ENCODE measurements at regions of chr6 and their contacts with region 1.

Region 1: GRCh38 chr6:2988426-2989331 is 11.0 kb upstream of the NQO2 start:
- DNase-seq: peak; percentile 92 to 94
- ATAC-seq: peak; percentile 87 to 95 (median 90)
- H3K4me3 ChIP-seq: peak overlapping the region; percentile 78
- H3K27ac ChIP-seq: peak overlapping the region; percentile 96
- H3K4me1 ChIP-seq: peaks cover 9% of the 10 kb centered on the region
- H3K27me3 ChIP-seq: no peaks in the 10 kb centered on the region
- CTCF ChIP-seq: peak; percentile 82

Region 2: DNA sequence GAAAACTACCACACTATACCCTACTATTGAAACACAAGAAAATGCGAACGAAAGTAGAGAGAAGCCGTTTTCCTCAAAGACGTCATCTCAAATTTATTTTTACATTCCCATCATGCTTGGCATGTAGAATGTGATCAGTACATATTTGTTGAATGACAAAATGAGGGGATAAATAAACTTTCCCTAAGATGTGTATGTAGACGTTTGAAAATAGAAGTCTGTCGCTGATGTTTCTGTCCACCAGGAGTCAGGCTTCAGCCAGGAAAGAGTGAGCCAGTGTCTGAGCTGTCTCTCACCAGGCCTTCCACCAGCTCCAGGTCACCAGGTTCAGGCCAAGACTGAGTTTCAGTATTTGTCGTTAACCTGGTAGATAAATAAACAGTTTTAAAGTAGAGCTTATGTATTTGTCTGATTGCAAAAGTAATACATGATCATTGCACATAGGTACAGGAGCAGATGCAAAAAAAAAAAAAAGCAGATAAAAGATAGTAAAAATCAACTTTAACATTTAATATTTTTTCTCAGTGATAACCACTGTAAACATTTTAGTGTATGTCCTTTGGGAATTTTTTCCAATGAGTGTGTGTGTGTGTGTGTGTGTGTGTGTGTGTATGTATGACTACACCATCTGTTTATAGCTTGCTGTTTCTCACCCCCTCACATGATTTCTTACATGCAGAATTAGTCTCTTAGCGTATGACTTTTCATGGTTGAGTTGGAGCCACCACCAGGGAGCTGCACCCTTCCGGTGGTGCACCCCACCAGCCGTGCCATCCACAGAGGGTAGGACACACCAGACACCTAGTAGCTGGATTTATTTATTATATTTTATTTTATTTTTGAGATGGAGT is 197.3 kb before region 1 on chr6:
- intact Hi-C with region 1: loop called in 1 of 2 experiments (anchors 5 kb)
- DNase-seq: peak; percentile 47 to 73
- ATAC-seq: peak; percentile 68 to 91 (median 86)
- H3K4me3 ChIP-seq: peak overlapping the region; percentile 55
- H3K27ac ChIP-seq: peak overlapping the region; percentile 92
- H3K4me1 ChIP-seq: peaks cover 28% of the 10 kb centered on the region
- H3K27me3 ChIP-seq: no peaks in the 10 kb centered on the region
- CTCF ChIP-seq: peak; percentile 78

Region 3: GRCh38 chr6:2848851-2849250 is 139.8 kb before region 1 on chr6:
- intact Hi-C with region 1: loop called (anchors 2 to 5 kb)
- DNase-seq: no peak
- ATAC-seq: no peak
- H3K4me3 ChIP-seq: no peak overlapping the region
- H3K27ac ChIP-seq: no peak overlapping the region
- H3K4me1 ChIP-seq: peaks cover 10% of the 10 kb centered on the region
- H3K27me3 ChIP-seq: no peaks in the 10 kb centered on the region
- CTCF ChIP-seq: no peak

Region 4: GRCh38 chr6:2971420-2972218 is 17.1 kb before region 1 on chr6 and contains the start of gene SERPINB6:
- intact Hi-C with region 1: loop called in 1 of 2 experiments (anchors 2 kb)
- DNase-seq: peak; percentile 81 to 88
- ATAC-seq: peak; percentile 76 to 82 (median 79)
- H3K4me3 ChIP-seq: peak within 1 kb of the TSS; percentile 88
- H3K27ac ChIP-seq: peak within 1 kb of the TSS; percentile 98
- H3K4me1 ChIP-seq: peaks cover 6% of the 10 kb centered on the region
- H3K27me3 ChIP-seq: no peaks in the 10 kb centered on the region
- CTCF ChIP-seq: no peak
- total RNA-seq, gene SERPINB6: 92.3 to 205 (median 141) TPM

Region 5: DNA sequence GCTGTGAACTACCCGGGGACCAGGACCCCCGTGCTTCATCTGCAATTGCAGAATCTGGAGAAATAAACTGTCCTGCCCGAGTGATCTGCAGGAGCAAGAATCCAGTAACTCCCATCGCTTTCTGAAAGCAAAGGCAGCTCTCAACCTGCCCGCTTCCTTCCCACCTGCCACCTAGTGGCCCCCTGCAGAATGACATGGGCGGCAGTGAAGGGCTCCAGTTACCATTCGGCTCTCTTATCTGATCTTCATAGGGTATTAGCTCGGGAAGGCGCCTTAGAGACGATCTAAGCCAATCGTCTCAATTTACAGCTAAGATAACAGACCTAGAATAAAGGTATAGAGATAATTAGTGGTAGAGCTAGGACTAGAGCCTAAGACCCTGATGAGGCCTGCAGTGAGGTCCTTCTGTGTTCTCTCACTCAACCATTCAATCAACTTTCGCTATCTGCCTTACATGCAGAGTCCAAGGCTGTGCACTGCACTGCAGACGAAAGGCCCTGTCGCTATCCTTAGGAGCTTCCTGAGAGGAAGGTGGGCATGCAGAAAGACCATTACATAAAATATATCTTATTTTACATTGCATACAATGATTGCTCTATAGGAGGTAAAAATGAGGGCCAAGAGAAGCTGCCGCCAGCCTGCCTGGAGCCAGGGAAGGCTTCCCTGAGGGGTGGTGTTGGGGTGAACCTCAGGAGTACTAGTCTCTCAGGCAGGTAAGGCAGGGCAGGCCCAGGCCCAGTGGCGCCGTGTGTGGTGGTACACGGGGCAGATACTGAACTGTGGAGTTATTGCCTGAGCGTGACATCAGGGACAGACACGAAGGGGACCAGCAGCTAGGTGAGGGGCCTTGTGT is 263.0 kb after region 1 on chr6:
- intact Hi-C with region 1: loop called in 1 of 2 experiments (anchors 5 kb)
- DNase-seq: peak; percentile 82 to 90
- ATAC-seq: peak; percentile 73 to 91 (median 86)
- H3K4me3 ChIP-seq: peak overlapping the region; percentile 39
- H3K27ac ChIP-seq: no peak overlapping the region
- H3K4me1 ChIP-seq: peaks cover 4% of the 10 kb centered on the region
- H3K27me3 ChIP-seq: peaks cover 0 to 30% (median 7%) of the 10 kb centered on the region in 3 donors
- CTCF ChIP-seq: peak; percentile 99

Measured in psoas muscle (tissue), 8 donors.